ENCODE measurements at regions of chr12 and their contacts with region 1.

Region 1: GRCh38 chr12:71746983-71747611 is 7.6 kb upstream of the RAB21 start:
- DNase-seq: peak in 2 of 10 donors; percentile 31 to 32
- H3K4me3 ChIP-seq: no peak overlapping the region
- H3K27ac ChIP-seq: no peak overlapping the region
- H3K27me3 ChIP-seq: no peaks in the 10 kb centered on the region
- CTCF ChIP-seq: peak; percentile 32 to 83 (median 74)

Region 2: GRCh38 chr12:71415336-71416231 is 331.5 kb before region 1 on chr12:
- intact Hi-C with region 1: loop called (anchors 5 to 10 kb)
- DNase-seq: peak in 1 of 10 donors; percentile 17
- H3K4me3 ChIP-seq: no peak overlapping the region
- H3K27ac ChIP-seq: no peak overlapping the region
- H3K27me3 ChIP-seq: peaks cover 0 to 3% (median 0%) of the 10 kb centered on the region in 45 donors
- CTCF ChIP-seq: peak; percentile 60 to 98 (median 85)

Region 3: GRCh38 chr12:71536279-71536938 is 210.7 kb before region 1 on chr12:
- intact Hi-C with region 1: no loop called
- DNase-seq: no peak
- H3K4me3 ChIP-seq: no peak overlapping the region
- H3K27ac ChIP-seq: peak overlapping the region in 48 of 59 donors; percentile 4 to 90 (median 58)
- H3K27me3 ChIP-seq: peaks cover 0 to 3% (median 0%) of the 10 kb centered on the region in 45 donors
- CTCF ChIP-seq: no peak

Region 4: DNA sequence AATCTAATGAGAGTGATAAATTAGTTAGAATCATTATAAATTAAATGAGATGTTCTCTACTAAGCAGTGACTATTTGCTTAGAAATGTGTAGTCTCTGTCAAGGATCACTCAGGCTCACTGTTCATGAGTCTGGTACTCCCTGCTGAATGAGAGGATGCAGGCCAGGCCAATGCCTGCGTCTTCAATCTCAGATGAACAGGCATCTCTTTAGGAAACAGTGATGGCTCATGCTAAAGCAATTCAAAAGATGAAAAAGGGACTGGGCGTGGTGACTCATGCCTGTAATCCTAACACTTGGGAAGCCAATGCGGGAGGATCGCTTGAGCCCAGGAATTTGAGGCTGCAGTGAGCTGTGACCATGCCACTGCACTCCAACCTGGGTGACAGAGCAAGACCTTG is 190.2 kb before region 1 on chr12:
- intact Hi-C with region 1: no loop called
- DNase-seq: no peak
- H3K4me3 ChIP-seq: no peak overlapping the region
- H3K27ac ChIP-seq: no peak overlapping the region
- H3K27me3 ChIP-seq: no peaks in the 10 kb centered on the region
- CTCF ChIP-seq: no peak

Region 5: DNA sequence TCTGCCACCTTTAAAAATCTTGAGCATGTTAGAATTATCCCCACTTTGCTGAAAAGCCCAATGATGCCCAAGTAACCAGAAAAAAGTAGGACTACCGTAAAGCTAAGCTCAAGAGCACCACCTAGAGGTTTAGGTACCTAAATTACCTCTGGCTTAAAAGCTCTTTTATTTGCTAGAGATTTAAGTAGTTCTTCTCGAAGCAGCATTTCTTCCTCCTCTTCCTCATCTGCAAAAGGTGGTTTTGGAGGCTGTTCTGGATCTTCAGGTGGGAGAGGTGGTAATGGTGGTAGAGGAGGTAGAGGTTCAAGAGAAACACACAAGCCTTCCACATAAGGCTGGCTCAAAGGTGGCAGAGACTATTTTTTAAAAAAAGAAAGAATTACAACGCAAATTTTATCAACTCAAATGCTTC is 110.4 kb before region 1 on chr12:
- intact Hi-C with region 1: loop called (anchors 2 to 10 kb)
- DNase-seq: no peak
- H3K4me3 ChIP-seq: no peak overlapping the region
- H3K27ac ChIP-seq: peak overlapping the region in 7 of 59 donors; percentile 7 to 47 (median 18)
- H3K27me3 ChIP-seq: no peaks in the 10 kb centered on the region
- CTCF ChIP-seq: peak; percentile 48 to 91 (median 76)

Region 6: DNA sequence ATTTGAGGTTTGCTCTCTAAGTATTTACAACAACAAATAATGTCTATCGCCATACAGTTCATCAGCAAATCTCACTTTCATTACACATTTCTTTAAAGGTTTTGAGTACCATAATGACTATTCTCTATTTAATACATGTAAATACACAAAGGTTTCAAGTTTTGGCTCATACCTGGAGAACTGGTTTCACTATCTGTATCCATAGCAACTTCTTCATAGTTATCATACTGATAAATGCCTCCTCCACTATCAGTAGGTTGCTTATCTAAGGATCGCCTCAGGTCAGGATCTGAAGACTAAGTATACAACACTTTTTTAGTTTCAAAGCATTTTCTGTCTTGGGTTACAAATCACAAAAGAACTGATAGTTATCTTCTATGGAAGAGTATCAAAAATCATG is 104.8 kb before region 1 on chr12:
- intact Hi-C with region 1: loop called (anchors 2 to 10 kb)
- DNase-seq: no peak
- H3K4me3 ChIP-seq: no peak overlapping the region
- H3K27ac ChIP-seq: no peak overlapping the region
- H3K27me3 ChIP-seq: no peaks in the 10 kb centered on the region
- CTCF ChIP-seq: no peak

Region 7: DNA sequence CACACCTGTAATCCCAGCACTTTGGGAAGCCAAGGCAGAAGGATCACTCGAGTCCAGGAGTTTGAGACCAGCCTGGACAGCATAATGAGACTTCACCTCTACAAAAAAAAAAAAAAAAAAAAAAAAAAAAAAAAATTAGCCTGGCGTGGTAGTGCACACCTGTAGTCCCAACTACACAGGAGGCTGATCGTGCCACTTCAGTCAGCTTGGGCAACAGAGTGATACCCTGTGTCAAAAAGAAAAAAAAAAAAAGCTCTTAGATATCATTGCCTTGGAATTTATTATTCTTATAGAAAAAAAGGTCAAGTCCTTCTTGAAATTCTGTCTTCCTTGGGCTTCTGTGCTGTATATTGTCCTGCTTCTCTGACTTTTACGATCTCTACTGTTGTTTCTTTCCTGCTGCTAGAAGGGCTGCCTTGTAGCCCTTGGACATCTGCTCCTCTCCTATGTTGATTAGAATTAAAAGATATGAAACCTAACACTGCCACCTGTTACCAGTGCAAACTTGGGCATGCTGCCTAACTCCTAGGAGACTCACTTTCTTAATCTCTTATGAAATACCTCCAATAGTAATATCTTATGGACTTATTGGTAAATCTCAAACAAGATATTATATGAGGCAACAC is 55.5 kb before region 1 on chr12:
- intact Hi-C with region 1: loop called in 1 of 2 experiments (anchors 2 kb)
- DNase-seq: no peak
- H3K4me3 ChIP-seq: no peak overlapping the region
- H3K27ac ChIP-seq: no peak overlapping the region
- H3K27me3 ChIP-seq: no peaks in the 10 kb centered on the region
- CTCF ChIP-seq: no peak

Region 8: GRCh38 chr12:71799106-71799505 is 52.0 kb after region 1 on chr12:
- intact Hi-C with region 1: no loop called
- DNase-seq: no peak
- H3K4me3 ChIP-seq: no peak overlapping the region
- H3K27ac ChIP-seq: no peak overlapping the region
- H3K27me3 ChIP-seq: no peaks in the 10 kb centered on the region
- CTCF ChIP-seq: no peak

Region 9: GRCh38 chr12:71981149-71981548 is 234.1 kb after region 1 on chr12:
- intact Hi-C with region 1: no loop called
- DNase-seq: no peak
- H3K4me3 ChIP-seq: no peak overlapping the region
- H3K27ac ChIP-seq: no peak overlapping the region
- H3K27me3 ChIP-seq: no peaks in the 10 kb centered on the region
- CTCF ChIP-seq: no peak